ENCODE measurements at regions of chr2 and their contacts with region 1.

Region 1: DNA sequence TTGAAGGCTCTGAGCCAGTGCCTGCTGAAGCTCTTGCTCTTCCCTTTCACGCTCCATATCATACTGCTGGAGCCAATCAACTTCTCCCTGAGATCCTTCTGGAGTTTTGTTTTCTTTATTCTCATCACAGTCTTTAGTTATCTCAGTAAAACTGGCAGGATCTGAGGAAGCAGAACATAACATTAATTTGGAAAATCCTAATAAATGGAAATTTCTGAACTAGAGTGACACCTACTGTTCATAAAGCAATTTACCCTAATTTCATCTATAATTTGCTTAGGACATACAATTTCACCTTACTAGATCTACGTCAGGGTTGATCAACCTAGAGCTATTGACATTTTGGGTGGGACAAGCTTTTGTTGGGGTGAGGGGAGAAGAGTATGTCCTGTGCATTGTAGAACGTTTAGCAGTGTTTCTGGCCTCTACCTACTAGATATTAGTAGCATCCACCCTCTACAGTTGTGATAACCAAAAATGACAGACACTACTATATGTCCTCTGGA is 47.1 kb downstream of the VIL1 start:
- DNase-seq: peak in 1 of 5 donors; percentile 6
- H3K4me3 ChIP-seq: no peak overlapping the region
- H3K4me3 Mint-ChIP-seq: no peak overlapping the region
- H3K27ac ChIP-seq: no peak overlapping the region
- H3K27ac Mint-ChIP-seq: peak overlapping the region in 4 of 8 donors; percentile 15 to 53 (median 36)
- H3K4me1 ChIP-seq: peaks cover 3% of the 10 kb centered on the region
- H3K4me1 Mint-ChIP-seq: peaks cover 8 to 11% (median 11%) of the 10 kb centered on the region in 3 donors
- H3K27me3 ChIP-seq: no peaks in the 10 kb centered on the region
- H3K27me3 Mint-ChIP-seq: no peaks in the 10 kb centered on the region

Region 2: DNA sequence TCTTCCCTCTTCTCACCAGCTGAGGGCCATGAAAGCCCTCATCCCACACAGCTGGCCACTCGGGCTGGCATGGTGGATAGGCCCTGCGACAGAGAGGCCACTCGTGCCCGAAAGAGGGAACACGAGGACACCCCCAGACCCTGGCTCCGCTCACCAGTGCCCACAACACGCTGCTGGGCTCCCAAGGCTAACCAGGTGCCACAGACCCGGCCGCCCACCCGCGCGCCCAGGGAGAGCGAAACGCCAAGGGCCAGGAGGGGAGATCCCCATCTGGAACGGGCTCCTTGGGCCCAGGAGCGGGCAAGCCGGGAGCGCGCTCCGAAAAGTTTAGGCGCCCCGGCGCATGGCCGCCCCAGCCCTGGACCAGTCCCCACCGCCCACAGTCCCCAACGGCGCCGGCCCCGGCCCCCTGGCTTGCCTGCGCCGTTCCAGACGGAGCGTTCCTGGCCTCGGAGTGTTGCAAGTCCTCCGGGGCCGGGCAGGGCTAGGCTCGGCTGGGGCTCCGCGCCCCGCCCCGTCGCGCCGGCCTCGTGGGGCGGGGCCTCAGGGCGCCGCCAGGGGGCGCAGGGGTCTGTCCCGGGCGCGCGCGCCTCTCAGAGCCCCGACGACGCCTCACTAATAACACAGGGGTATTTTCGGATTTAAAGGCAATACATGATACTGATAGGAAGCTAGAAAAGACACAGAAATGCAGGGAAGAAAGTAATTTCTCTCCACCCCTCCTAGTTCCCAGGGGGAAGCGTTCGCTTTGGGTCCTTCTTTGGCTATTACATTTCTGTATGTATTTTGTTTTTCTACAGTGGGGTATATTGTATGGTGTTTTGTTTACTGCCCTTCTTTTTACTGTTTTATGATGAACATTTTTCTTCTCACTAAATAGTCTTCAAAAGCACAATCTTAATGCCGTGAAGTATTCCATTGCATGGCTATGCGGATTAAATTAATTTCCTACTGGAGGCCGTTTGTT is 173.7 kb before region 1 on chr2 and contains the start of gene TMBIM1:
- CTCF ChIA-PET with region 1: interaction called, 11 read pairs
- POLR2A ChIA-PET with region 1: no interaction called
- DNase-seq: peak; percentile 76 to 84 (median 79)
- H3K4me3 ChIP-seq: peak within 1 kb of the TSS; percentile 83
- H3K4me3 Mint-ChIP-seq: peak within 1 kb of the TSS; percentile 88 to 94 (median 92)
- H3K27ac ChIP-seq: peak within 1 kb of the TSS; percentile 84
- H3K27ac Mint-ChIP-seq: peak within 1 kb of the TSS; percentile 88 to 99 (median 98)
- H3K4me1 ChIP-seq: peaks cover 58% of the 10 kb centered on the region
- H3K4me1 Mint-ChIP-seq: peaks cover 46 to 66% (median 58%) of the 10 kb centered on the region in 3 donors
- H3K27me3 ChIP-seq: no peaks in the 10 kb centered on the region
- H3K27me3 Mint-ChIP-seq: no peaks in the 10 kb centered on the region
- total RNA-seq, gene TMBIM1: 82.3 to 92.3 TPM

Region 3: DNA sequence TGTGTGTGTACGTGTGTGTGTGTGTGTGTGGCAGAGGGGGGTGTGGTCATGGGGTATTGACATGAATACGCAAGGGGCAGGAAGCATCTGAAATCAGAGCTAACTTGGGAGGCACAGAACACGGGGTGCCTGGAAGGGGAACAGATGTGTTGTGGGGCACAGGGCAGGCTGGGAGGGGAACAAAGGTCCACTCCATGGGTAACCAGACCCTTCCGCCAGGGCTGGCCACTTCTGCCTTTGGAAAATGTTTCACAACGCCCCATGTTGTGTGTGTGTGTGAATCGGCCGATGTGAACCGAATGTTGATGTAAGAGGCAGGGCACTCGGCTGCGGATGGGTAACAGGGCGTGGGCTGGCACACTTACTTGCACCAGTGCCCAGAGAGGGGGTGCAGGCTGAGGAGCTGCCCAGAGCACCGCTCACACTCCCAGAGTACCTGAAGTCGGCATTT is 84.1 kb before region 1 on chr2 and contains the start of gene SLC11A1:
- CTCF ChIA-PET with region 1: no interaction called
- POLR2A ChIA-PET with region 1: no interaction called
- DNase-seq: no peak
- H3K4me3 ChIP-seq: no peak within 1 kb of the TSS
- H3K4me3 Mint-ChIP-seq: peak within 1 kb of the TSS in 1 of 7 donors; percentile 13
- H3K27ac ChIP-seq: no peak within 1 kb of the TSS
- H3K27ac Mint-ChIP-seq: peak within 1 kb of the TSS in 2 of 8 donors; percentile 43 to 90
- H3K4me1 ChIP-seq: no peaks in the 10 kb centered on the region
- H3K4me1 Mint-ChIP-seq: peaks cover 0 to 6% (median 5%) of the 10 kb centered on the region in 3 donors
- H3K27me3 ChIP-seq: no peaks in the 10 kb centered on the region
- H3K27me3 Mint-ChIP-seq: peaks cover 0 to 4% of the 10 kb centered on the region in 2 donors
- total RNA-seq, gene SLC11A1: 1.1 to 2.1 TPM

Region 4: GRCh38 chr2:218418717-218419458 is 47.2 kb before region 1 on chr2 and contains the start of gene VIL1:
- CTCF ChIA-PET with region 1: no interaction called
- POLR2A ChIA-PET with region 1: no interaction called
- DNase-seq: no peak
- H3K4me3 ChIP-seq: no peak within 1 kb of the TSS
- H3K4me3 Mint-ChIP-seq: no peak within 1 kb of the TSS
- H3K27ac ChIP-seq: no peak within 1 kb of the TSS
- H3K27ac Mint-ChIP-seq: no peak within 1 kb of the TSS
- H3K4me1 ChIP-seq: no peaks in the 10 kb centered on the region
- H3K4me1 Mint-ChIP-seq: peaks cover 0 to 5% (median 2%) of the 10 kb centered on the region in 3 donors
- H3K27me3 ChIP-seq: no peaks in the 10 kb centered on the region
- H3K27me3 Mint-ChIP-seq: peaks cover 0 to 4% of the 10 kb centered on the region in 2 donors
- total RNA-seq, gene VIL1: not detected

Region 5: GRCh38 chr2:218482651-218483050 is 16.6 kb after region 1 on chr2:
- CTCF ChIA-PET with region 1: no interaction called
- POLR2A ChIA-PET with region 1: interaction called, 10 read pairs
- DNase-seq: no peak
- H3K4me3 ChIP-seq: no peak overlapping the region
- H3K4me3 Mint-ChIP-seq: no peak overlapping the region
- H3K27ac ChIP-seq: no peak overlapping the region
- H3K27ac Mint-ChIP-seq: peak overlapping the region in 4 of 8 donors; percentile 5 to 69 (median 37)
- H3K4me1 ChIP-seq: peaks cover 18% of the 10 kb centered on the region
- H3K4me1 Mint-ChIP-seq: peaks cover 8 to 13% (median 12%) of the 10 kb centered on the region in 3 donors
- H3K27me3 ChIP-seq: no peaks in the 10 kb centered on the region
- H3K27me3 Mint-ChIP-seq: no peaks in the 10 kb centered on the region

Measured in CD8-positive, alpha-beta memory T cell (primary cell).